ENCODE measurements at regions of chr11 and their contacts with region 1.

Region 1: DNA sequence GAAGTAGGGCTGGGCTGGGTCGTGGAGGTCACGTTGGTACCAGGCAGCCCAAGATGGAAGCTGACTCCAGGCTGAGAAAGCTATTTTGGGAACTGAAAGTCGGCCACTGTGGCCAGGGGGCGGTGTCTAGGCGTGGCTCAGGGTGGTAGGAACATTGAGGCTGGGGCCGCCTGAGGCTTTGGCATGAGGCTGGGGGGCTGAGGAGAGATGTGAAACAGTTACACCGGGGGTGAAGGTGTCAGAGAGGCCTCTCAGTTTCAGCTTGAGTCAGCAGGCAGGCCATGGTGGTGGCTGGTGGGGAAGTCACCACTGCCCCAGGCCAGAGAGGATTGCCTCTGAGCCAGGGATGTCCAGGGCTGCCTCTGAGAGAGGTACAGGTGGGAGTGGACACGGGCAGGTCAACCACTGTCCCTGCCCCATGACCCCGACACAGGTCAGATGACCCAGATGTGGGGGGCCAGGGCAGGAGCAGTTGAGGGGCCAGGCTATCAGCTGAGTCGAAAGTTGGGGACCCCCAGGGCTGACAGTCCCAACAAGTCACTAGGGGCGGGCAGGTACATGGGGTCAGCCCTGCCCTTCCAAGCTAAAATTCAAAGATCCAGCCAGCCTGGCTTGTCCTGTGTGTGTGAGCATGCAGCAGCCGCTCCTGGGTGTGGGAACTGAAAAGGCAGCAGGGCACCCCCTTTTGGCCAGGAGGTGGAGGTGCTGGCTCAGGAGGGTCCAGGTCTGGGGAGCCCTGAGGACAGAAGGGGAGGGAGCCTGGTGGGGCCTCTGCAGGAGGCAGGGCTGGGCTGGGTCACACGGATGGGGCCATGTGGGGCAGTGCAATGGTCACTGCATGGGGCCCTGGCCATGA is 7.2 kb downstream of the KCNK7 start:
- DNase-seq: no peak
- H3K4me3 ChIP-seq: no peak overlapping the region
- CTCF ChIP-seq: peak; percentile 57

Region 2: GRCh38 chr11:65569973-65570918 is 18.2 kb before region 1 on chr11 and contains the start of gene ZNRD2:
- CTCF ChIA-PET with region 1: interaction called, 60 read pairs
- POLR2A ChIA-PET with region 1: interaction called, 7 read pairs
- DNase-seq: peak; percentile 88
- H3K4me3 ChIP-seq: peak within 1 kb of the TSS; percentile 89
- CTCF ChIP-seq: peak; percentile 62

Region 3: DNA sequence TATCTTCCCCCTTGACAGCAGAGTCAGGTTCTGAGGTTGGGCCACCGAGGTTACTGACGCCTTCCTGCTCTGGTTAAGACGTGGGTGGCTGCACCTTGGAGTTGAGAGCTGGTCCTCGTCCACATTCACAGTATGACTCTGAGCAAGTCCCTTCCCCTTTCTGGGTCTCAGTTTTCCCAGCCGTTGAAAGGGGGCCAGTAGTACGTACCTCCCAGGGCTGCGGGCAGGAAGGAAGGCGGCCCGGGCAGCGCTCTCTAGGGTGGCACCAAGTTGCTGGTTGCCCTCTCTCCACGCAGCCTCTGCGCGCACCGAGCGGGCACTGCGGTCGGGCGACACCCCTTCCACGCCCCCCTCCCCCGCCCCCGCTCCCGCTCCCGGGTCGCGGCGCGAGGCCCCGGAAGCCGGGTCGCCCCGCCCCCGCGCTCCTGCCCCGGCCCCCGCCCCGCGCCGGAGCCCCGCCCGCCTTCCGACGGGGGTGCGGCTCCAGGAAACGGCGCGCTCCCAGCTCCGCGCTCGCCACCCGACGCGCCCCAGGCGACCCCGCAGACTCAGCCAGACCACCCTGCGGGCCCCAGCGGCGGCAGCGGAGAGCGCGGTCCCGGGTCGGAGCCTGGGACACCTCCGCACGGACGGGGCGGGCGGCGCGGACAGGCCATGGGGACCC is 12.7 kb before region 1 on chr11 and contains the start of gene EHBP1L1:
- CTCF ChIA-PET with region 1: interaction called, 60 read pairs
- POLR2A ChIA-PET with region 1: interaction called, 18 read pairs
- DNase-seq: no peak
- H3K4me3 ChIP-seq: peak within 1 kb of the TSS; percentile 68
- CTCF ChIP-seq: no peak

Region 4: DNA sequence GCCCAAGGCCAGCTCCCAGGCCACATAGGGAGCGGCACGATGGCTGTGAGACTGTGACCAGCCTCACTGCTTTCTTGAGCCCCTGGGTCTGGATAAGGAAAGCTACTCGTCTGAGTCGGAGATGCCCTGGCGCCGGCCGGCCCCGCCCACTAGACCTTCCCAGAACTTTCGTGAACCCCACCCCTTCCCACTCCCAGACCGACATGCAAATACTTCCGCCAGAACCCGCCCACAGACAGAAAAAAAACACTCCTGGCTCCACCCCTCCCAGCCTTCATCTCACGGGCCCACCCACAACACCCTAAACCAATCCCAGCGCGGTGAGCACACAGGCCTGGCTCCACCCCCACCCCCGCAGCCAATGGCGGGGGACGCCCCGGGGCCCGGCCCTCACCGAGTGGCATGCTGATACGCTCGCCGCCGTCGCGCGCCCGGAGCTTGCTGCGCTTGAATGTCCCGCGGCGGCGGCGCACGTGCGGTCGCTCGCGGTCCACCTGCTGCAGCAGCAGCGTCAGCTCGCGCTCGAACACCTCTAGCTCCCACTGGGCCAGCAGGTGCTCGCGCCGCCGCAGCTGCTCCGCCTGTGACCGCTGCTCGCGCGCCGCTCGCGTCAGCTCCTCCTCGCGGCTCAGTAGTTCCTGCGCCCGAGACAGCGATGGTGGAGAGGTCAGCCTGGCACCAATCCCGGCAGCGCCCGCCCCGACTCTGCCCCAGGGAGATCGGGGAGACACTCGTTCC is 18.6 kb after region 1 on chr11:
- CTCF ChIA-PET with region 1: interaction called, 134 read pairs
- POLR2A ChIA-PET with region 1: interaction called, 5 read pairs
- DNase-seq: peak; percentile 59
- H3K4me3 ChIP-seq: peak overlapping the region; percentile 40
- CTCF ChIP-seq: no peak

Region 5: DNA sequence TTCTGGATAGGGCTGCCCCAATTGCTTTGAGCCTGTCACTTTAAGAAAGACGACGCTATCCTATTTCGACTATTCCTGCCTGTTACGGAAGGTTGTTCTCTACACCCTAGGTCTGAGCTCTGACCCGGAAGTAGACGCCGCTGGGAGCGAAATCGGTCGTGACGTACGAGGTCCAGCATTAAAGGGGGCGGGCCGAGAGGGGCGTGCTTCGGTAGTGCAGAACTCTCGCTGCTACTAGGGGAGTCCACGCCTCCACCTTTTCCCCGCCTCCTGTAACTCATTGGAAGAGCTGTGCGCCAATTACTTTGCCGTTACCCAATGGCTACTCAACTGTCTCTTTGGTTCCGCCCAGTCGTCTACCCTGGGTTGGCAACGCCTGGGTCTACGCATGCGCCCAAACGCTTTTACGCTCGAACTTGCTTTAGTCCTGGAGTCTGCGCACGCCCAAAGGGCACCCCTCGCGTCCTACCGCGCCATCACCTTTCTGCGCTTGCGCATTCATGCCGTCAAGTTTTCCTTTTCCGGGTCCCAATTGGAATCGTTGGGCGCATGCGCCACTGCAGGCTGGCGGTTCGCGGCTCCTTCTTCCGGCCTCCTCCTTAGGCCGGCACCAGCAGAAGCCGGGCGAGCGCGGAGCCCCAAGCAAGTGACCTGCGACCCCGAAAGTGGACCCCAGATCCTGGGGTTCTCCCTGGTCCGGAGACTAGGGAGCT is 27.0 kb after region 1 on chr11 and contains the start of gene PCNX3:
- CTCF ChIA-PET with region 1: interaction called, 134 read pairs
- POLR2A ChIA-PET with region 1: interaction called, 4 read pairs
- DNase-seq: peak; percentile 99
- H3K4me3 ChIP-seq: peak within 1 kb of the TSS; percentile 93
- CTCF ChIP-seq: no peak

Region 6: DNA sequence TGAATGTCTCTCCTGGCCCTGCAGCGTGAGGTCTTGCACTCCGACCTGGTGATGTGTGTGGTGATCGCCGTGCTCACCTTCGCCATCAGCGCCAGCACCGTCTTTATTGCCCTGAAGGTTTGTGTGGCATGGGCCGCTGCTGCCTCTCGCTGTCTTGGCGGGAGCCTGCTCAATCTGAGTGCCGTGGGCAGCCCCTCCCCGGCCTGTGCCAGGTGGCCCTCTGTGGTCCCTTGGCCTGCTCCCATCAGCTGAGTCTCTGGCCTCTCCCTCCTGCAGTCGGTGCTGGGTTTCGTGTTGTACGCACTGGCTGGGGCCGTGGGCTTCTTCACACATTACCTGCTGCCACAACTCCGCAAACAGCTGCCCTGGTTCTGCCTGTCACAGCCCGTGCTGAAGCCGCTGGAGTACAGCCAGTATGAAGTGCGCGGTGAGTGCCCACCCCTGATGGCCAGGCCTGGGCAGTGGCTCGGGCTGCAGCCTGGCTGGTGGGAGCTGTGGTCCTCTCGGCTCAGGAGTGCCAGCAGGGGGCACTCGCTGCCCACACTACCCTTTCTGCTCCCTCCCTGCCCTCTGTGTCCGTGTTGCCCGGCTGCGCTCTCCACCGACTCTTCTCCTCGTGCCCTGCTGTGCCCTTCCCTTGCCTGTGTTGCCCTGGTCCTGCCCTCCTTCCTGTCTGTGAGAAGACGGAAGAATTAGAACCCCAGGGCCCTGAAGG is 37.4 kb after region 1 on chr11:
- CTCF ChIA-PET with region 1: no interaction called
- POLR2A ChIA-PET with region 1: no interaction called
- DNase-seq: no peak
- H3K4me3 ChIP-seq: no peak overlapping the region
- CTCF ChIP-seq: peak; percentile 52

Region 7: DNA sequence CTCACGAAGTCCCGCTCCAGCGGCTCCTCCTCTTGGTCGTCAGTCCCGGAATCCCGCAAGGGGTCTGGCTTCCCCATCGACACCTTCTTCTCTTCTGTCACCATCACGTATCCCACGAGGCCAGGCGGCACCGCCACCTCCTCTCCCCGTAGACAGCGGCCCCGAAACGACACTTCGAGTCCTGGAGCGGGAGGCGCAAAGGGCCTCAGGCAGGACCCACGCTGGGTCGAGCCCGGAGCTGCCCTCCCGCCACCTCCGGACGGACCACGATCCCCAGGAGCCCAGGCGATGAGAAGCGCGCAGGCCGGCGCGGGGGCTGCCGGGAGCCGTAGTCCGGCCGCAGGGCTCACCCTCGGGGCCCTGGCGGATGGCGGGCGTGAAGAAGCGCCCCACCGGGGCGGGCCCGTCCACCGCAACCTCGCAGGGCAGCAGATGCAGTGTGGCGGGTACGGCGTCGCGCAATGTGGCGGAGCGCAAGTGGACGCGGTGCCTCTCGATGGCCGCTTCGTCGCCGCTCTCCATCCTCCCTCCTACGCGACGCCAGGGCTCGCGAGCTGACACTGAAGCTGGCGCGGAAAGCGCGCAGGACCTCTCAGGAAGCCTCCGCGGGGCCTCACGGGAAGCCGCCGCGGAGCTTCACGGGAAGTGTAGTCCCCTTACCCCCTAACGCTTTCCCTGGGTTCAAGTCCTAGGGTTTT is 132.0 kb after region 1 on chr11 and contains the start of gene RNASEH2C:
- CTCF ChIA-PET with region 1: no interaction called
- POLR2A ChIA-PET with region 1: no interaction called
- DNase-seq: no peak
- H3K4me3 ChIP-seq: peak within 1 kb of the TSS; percentile 89
- CTCF ChIP-seq: no peak

Region 8: DNA sequence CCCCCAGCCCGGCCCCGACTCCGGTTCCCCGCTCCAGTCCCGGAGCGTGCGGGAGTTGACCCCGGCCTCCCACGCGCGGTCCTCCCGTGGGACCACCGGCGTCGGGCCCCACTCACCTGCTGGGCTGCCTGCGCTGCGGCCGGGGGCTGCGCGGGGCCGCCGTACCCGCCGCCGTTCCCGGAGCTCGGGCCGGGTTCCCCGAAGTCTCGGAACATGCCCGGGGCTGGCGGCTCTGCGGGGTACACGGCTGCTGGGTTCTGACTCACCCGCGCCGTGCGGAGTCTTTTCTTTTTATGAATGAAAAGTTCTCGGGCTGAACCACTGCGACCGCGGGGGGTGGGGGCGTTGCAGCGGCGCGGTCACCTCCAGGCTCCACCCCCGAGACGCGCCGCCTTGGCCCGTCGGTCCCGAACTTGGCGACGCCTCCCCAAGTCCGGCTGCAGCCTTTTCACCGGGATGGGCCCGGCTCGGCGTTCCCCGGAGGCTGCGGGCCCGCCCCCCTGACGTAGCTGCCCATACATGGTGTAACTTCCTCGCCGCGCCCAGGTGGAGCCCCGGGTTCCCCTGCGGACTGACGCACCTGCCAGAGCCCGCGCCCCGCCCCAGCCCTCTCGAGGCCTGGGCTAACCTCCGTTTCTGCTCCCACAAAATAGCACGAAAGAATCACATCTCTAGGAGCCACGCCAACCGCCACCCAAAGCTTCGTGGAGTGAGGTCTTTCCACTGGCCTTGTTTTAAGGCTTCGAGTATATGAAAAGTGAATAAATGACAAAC is 311.9 kb after region 1 on chr11 and contains the start of gene FOSL1:
- CTCF ChIA-PET with region 1: no interaction called
- POLR2A ChIA-PET with region 1: no interaction called
- DNase-seq: peak; percentile 73
- H3K4me3 ChIP-seq: peak within 1 kb of the TSS; percentile 98
- CTCF ChIP-seq: no peak

Measured in AG04449 (cell line).